CD8-positive, alpha-beta memory T cell (primary cell): ENCODE measurements at regions of chrX and their contacts with region 1.

Region 1: GRCh38 chrX:153539171-153539978 is 21.9 kb downstream of the ATP2B3 start:
- DNase-seq: peak; percentile 31 to 60 (median 41)
- H3K4me3 ChIP-seq: no peak overlapping the region
- H3K4me3 Mint-ChIP-seq: no peak overlapping the region
- H3K27ac ChIP-seq: no peak overlapping the region
- H3K27ac Mint-ChIP-seq: no peak overlapping the region
- H3K4me1 ChIP-seq: no peaks in the 10 kb centered on the region
- H3K4me1 Mint-ChIP-seq: no peaks in the 10 kb centered on the region
- H3K27me3 ChIP-seq: no peaks in the 10 kb centered on the region
- H3K27me3 Mint-ChIP-seq: peaks cover 0 to 12% of the 10 kb centered on the region in 2 donors

Region 2: GRCh38 chrX:153381684-153382532 is 157.5 kb before region 1 on chrX:
- CTCF ChIA-PET with region 1: no interaction called
- POLR2A ChIA-PET with region 1: no interaction called
- DNase-seq: peak in 1 of 5 donors; percentile 16
- H3K4me3 ChIP-seq: no peak overlapping the region
- H3K4me3 Mint-ChIP-seq: no peak overlapping the region
- H3K27ac ChIP-seq: no peak overlapping the region
- H3K27ac Mint-ChIP-seq: no peak overlapping the region
- H3K4me1 ChIP-seq: no peaks in the 10 kb centered on the region
- H3K4me1 Mint-ChIP-seq: no peaks in the 10 kb centered on the region
- H3K27me3 ChIP-seq: no peaks in the 10 kb centered on the region
- H3K27me3 Mint-ChIP-seq: peaks cover 0 to 3% of the 10 kb centered on the region in 2 donors

Region 3: GRCh38 chrX:153521034-153521433 is 18.3 kb before region 1 on chrX:
- CTCF ChIA-PET with region 1: no interaction called
- POLR2A ChIA-PET with region 1: no interaction called
- DNase-seq: no peak
- H3K4me3 ChIP-seq: no peak overlapping the region
- H3K4me3 Mint-ChIP-seq: no peak overlapping the region
- H3K27ac ChIP-seq: no peak overlapping the region
- H3K27ac Mint-ChIP-seq: no peak overlapping the region
- H3K4me1 ChIP-seq: no peaks in the 10 kb centered on the region
- H3K4me1 Mint-ChIP-seq: peaks cover 0 to 7% (median 0%) of the 10 kb centered on the region in 3 donors
- H3K27me3 ChIP-seq: no peaks in the 10 kb centered on the region
- H3K27me3 Mint-ChIP-seq: peaks cover 12 to 14% of the 10 kb centered on the region in 2 donors

Region 4: GRCh38 chrX:153662266-153662665 is 122.9 kb after region 1 on chrX:
- CTCF ChIA-PET with region 1: interaction called, 59 read pairs
- POLR2A ChIA-PET with region 1: no interaction called
- DNase-seq: peak; percentile 35 to 68 (median 44)
- H3K4me3 ChIP-seq: no peak overlapping the region
- H3K4me3 Mint-ChIP-seq: peak overlapping the region; percentile 30 to 70 (median 63)
- H3K27ac ChIP-seq: no peak overlapping the region
- H3K27ac Mint-ChIP-seq: peak overlapping the region in 1 of 8 donors; percentile 9
- H3K4me1 ChIP-seq: no peaks in the 10 kb centered on the region
- H3K4me1 Mint-ChIP-seq: peaks cover 0 to 6% (median 4%) of the 10 kb centered on the region in 3 donors
- H3K27me3 ChIP-seq: no peaks in the 10 kb centered on the region
- H3K27me3 Mint-ChIP-seq: peaks cover 12 to 25% of the 10 kb centered on the region in 2 donors